ENCODE measurements at regions of chr5 and their contacts with region 1.

Region 1: DNA sequence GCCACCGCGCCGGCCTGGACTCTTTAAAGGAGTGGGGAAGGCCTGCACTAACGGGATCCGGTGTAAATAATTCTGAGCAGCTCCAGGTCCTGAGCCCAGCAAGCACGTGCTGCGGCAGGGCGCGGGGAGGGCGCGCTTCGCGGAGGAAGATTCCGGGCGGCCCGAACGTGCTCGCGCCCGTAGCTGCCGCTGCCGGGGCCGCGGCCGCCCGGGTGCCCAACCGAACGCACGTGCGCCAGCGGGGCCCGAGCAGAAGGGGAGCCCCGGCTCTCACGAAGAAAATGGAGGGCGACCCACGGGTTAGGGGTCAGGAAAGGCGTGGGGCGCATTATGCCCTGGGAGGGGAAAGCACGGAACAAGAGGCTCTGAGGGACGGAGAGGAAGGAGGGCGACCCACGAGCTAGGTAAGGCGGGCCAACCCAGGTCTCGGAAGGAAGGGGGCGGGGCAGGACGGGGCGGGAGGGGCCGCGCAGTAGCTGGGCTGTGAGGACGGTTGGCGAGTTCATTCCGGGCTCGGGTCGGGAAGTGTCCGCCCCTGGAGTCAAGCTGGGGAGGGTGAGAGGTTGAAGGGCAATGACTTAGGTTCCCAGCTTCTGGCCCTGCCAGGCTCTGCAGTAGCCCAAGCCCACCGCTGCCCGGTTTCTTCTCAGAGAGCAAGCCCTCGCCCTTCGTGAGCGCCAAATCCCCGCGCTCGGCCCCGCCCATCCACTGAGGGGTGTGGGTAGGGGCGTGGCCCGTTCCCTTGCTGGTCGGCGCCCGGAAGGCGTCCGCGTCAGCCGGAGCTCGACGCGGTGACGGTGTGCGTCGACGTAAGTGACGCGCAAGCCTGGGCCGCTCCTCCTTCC is at the start of gene ZNF131:
- DNase-seq: peak; percentile 95 to 99 (median 97)
- ATAC-seq: peak; percentile 87
- H3K4me3 ChIP-seq: peak within 1 kb of the TSS; percentile 74 to 82
- H3K4me3 Mint-ChIP-seq: peak within 1 kb of the TSS; percentile 96
- H3K27ac ChIP-seq: peak within 1 kb of the TSS; percentile 87 to 98
- H3K27ac Mint-ChIP-seq: peak within 1 kb of the TSS; percentile 98
- H3K4me1 ChIP-seq: peaks cover 34% of the 10 kb centered on the region
- H3K4me1 Mint-ChIP-seq: peaks cover 39% of the 10 kb centered on the region
- H3K27me3 ChIP-seq: no peaks in the 10 kb centered on the region
- H3K27me3 Mint-ChIP-seq: no peaks in the 10 kb centered on the region
- CTCF ChIP-seq: no peak
- total RNA-seq, gene ZNF131: 76.7 to 84.9 TPM

Region 2: GRCh38 chr5:41903892-41904799 is 1216.8 kb before region 1 on chr5 and contains the start of gene RIMOC1:
- CTCF ChIA-PET with region 1: no interaction called
- POLR2A ChIA-PET with region 1: interaction called, 6 read pairs
- intact Hi-C with region 1: loop called in 1 of 2 experiments (anchors 1 kb)
- DNase-seq: peak; percentile 94 to 99 (median 97)
- ATAC-seq: peak; percentile 89
- H3K4me3 ChIP-seq: peak within 1 kb of the TSS; percentile 73 to 83
- H3K4me3 Mint-ChIP-seq: peak within 1 kb of the TSS; percentile 99
- H3K27ac ChIP-seq: peak within 1 kb of the TSS; percentile 84 to 91
- H3K27ac Mint-ChIP-seq: peak within 1 kb of the TSS; percentile 100
- H3K4me1 ChIP-seq: peaks cover 17% of the 10 kb centered on the region
- H3K4me1 Mint-ChIP-seq: peaks cover 44% of the 10 kb centered on the region
- H3K27me3 ChIP-seq: no peaks in the 10 kb centered on the region
- H3K27me3 Mint-ChIP-seq: no peaks in the 10 kb centered on the region
- CTCF ChIP-seq: no peak
- total RNA-seq, gene RIMOC1: 9.0 to 9.2 TPM

Region 3: GRCh38 chr5:42994246-42995151 is 126.4 kb before region 1 on chr5:
- CTCF ChIA-PET with region 1: interaction called, 6 read pairs
- POLR2A ChIA-PET with region 1: interaction called, 89 read pairs
- intact Hi-C with region 1: loop called (anchors 1 to 5 kb)
- DNase-seq: peak; percentile 75 to 94 (median 88)
- ATAC-seq: peak; percentile 63
- H3K4me3 ChIP-seq: peak overlapping the region; percentile 78 to 92
- H3K4me3 Mint-ChIP-seq: peak overlapping the region; percentile 99
- H3K27ac ChIP-seq: peak overlapping the region; percentile 97
- H3K27ac Mint-ChIP-seq: peak overlapping the region; percentile 100
- H3K4me1 ChIP-seq: peaks cover 23% of the 10 kb centered on the region
- H3K4me1 Mint-ChIP-seq: peaks cover 41% of the 10 kb centered on the region
- H3K27me3 ChIP-seq: no peaks in the 10 kb centered on the region
- H3K27me3 Mint-ChIP-seq: no peaks in the 10 kb centered on the region
- CTCF ChIP-seq: peak; percentile 93

Region 4: GRCh38 chr5:43066799-43067741 is 53.9 kb before region 1 on chr5:
- CTCF ChIA-PET with region 1: interaction called, 5 read pairs
- POLR2A ChIA-PET with region 1: interaction called, 64 read pairs
- intact Hi-C with region 1: loop called (anchors 1 to 5 kb)
- DNase-seq: peak; percentile 85 to 94 (median 90)
- ATAC-seq: peak; percentile 43
- H3K4me3 ChIP-seq: peak overlapping the region; percentile 87 to 99
- H3K4me3 Mint-ChIP-seq: peak overlapping the region; percentile 98
- H3K27ac ChIP-seq: peak overlapping the region; percentile 96 to 98
- H3K27ac Mint-ChIP-seq: peak overlapping the region; percentile 100
- H3K4me1 ChIP-seq: peaks cover 18% of the 10 kb centered on the region
- H3K4me1 Mint-ChIP-seq: peaks cover 48% of the 10 kb centered on the region
- H3K27me3 ChIP-seq: no peaks in the 10 kb centered on the region
- H3K27me3 Mint-ChIP-seq: no peaks in the 10 kb centered on the region
- CTCF ChIP-seq: no peak

Region 5: GRCh38 chr5:43191740-43192557 is 71.0 kb after region 1 on chr5 and contains the start of gene NIM1K:
- CTCF ChIA-PET with region 1: no interaction called
- POLR2A ChIA-PET with region 1: no interaction called
- intact Hi-C with region 1: loop called (anchors 1 to 5 kb)
- DNase-seq: peak in 7 of 9 experiments; percentile 1 to 56 (median 28)
- ATAC-seq: peak; percentile 37
- H3K4me3 ChIP-seq: peak within 1 kb of the TSS; percentile 47 to 56
- H3K4me3 Mint-ChIP-seq: peak within 1 kb of the TSS; percentile 89
- H3K27ac ChIP-seq: no peak within 1 kb of the TSS
- H3K27ac Mint-ChIP-seq: peak within 1 kb of the TSS; percentile 13
- H3K4me1 ChIP-seq: peaks cover 19% of the 10 kb centered on the region
- H3K4me1 Mint-ChIP-seq: peaks cover 27% of the 10 kb centered on the region
- H3K27me3 ChIP-seq: peaks cover 4 to 8% of the 10 kb centered on the region in 2 experiments
- H3K27me3 Mint-ChIP-seq: peaks cover 24% of the 10 kb centered on the region
- CTCF ChIP-seq: no peak
- total RNA-seq, gene NIM1K: 0.14 to 0.46 TPM

Region 6: DNA sequence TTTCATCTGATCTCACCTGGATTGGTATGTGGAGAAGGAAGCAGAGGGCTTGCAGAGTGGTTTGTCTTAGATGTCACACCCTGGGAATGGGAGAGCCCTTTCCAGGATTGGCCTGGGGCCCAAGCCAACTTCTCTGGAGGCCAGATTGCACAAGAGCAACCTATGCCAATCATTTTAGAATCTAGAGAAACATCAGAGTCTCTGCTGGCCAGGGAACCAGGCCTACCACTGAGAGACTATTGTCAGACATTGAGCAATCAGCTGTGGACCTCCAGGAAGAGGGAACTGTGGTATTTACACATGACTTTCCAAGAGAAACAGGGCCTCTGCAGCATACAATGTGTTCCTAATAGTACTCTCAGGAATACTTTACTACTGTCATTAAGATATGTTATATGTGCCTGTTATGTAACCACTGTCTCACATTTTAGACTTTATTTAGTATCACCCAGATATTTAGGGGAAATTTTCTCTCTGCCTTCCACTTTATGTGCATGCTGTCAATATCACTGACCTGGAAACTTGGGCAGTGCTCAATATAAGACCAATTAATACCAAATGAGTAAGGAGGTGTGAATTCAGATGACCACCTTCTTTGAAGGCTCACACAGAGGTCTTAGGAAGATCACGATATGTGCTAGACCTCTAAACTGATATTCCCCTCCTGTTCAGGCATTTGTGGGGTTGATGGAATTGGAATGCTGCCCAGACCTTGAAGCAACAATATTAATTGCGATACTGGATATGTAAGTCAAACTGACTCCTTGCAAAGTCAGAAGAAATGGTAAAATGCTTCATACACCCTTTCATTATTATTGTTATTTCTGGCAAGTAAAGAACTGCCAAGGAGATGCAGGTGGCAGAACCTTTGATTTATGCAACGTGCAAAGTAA is 311.8 kb after region 1 on chr5:
- CTCF ChIA-PET with region 1: no interaction called
- POLR2A ChIA-PET with region 1: no interaction called
- intact Hi-C with region 1: no loop called
- DNase-seq: no peak
- ATAC-seq: no peak
- H3K4me3 ChIP-seq: no peak overlapping the region
- H3K4me3 Mint-ChIP-seq: no peak overlapping the region
- H3K27ac ChIP-seq: no peak overlapping the region
- H3K27ac Mint-ChIP-seq: no peak overlapping the region
- H3K4me1 ChIP-seq: no peaks in the 10 kb centered on the region
- H3K4me1 Mint-ChIP-seq: no peaks in the 10 kb centered on the region
- H3K27me3 ChIP-seq: no peaks in the 10 kb centered on the region
- H3K27me3 Mint-ChIP-seq: no peaks in the 10 kb centered on the region
- CTCF ChIP-seq: no peak

Region 7: GRCh38 chr5:43514816-43515677 is 394.1 kb after region 1 on chr5 and contains the start of gene C5orf34:
- CTCF ChIA-PET with region 1: no interaction called
- POLR2A ChIA-PET with region 1: no interaction called
- intact Hi-C with region 1: loop called (anchors 1 to 10 kb)
- DNase-seq: peak; percentile 84 to 97 (median 95)
- ATAC-seq: peak; percentile 86
- H3K4me3 ChIP-seq: peak within 1 kb of the TSS; percentile 68 to 77
- H3K4me3 Mint-ChIP-seq: peak within 1 kb of the TSS; percentile 97
- H3K27ac ChIP-seq: peak within 1 kb of the TSS; percentile 82
- H3K27ac Mint-ChIP-seq: peak within 1 kb of the TSS; percentile 95
- H3K4me1 ChIP-seq: peaks cover 15% of the 10 kb centered on the region
- H3K4me1 Mint-ChIP-seq: peaks cover 31% of the 10 kb centered on the region
- H3K27me3 ChIP-seq: no peaks in the 10 kb centered on the region
- H3K27me3 Mint-ChIP-seq: no peaks in the 10 kb centered on the region
- CTCF ChIP-seq: no peak
- total RNA-seq, gene C5orf34: 0.61 to 0.95 TPM

Measured in CD8-positive, alpha-beta T cell (primary cell).